B cell (primary cell): ENCODE measurements at regions of chr9 and their contacts with region 1.

Region 1: DNA sequence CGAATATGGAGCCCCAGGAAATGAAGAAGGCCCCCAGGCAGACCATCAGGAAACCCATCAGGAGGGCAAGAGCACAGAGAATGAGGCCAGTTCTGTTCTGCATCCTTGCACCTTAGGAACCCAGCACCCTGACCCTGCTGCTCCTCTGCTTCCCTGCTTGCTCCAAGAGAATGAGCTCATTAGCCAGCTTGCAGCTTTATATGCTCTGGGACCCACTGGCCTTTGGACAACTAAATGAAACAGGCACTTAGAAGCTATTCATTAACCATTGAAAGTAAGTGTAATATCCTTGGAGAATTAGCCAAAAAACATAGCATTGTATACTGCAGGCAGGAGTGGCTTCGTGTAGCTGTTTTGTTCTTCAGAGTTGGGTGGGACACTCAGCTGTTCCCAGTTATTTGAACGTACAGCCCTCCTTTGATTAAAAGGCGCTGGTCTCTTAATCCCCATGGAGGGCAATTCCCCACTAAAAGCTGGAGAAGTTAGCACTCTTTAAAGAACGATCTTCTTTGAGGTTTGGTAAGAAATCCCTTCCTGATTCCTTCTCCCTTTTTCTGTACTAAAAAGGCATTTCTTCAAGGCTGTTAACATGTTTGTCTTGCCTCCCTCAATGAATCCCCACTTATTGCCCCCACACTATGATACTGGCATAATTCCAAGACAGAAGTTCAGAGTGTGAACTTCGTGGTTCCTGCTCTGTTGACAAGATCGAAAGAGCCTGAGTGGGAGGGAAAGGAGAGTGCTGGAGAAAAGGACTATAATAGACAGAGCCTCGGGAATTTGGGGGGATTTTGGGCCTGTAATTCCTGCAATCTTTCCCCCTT is at the start of gene TMEM252:
- DNase-seq: no peak
- ATAC-seq: no peak
- H3K4me3 ChIP-seq: no peak within 1 kb of the TSS
- H3K4me3 Mint-ChIP-seq: no peak within 1 kb of the TSS
- H3K27ac ChIP-seq: no peak within 1 kb of the TSS
- H3K27ac Mint-ChIP-seq: no peak within 1 kb of the TSS
- H3K4me1 ChIP-seq: peaks cover 6 to 8% of the 10 kb centered on the region in 2 donors
- H3K4me1 Mint-ChIP-seq: peaks cover 19% of the 10 kb centered on the region
- H3K27me3 ChIP-seq: no peaks in the 10 kb centered on the region
- H3K27me3 Mint-ChIP-seq: no peaks in the 10 kb centered on the region
- CTCF ChIP-seq: no peak
- total RNA-seq, gene TMEM252: not detected in 2 replicates

Region 2: GRCh38 chr9:68560071-68560844 is 19.3 kb after region 1 on chr9:
- CTCF ChIA-PET with region 1: interaction called, 10 read pairs
- POLR2A ChIA-PET with region 1: no interaction called
- intact Hi-C with region 1: no loop called
- DNase-seq: peak; percentile 75
- ATAC-seq: peak; percentile 76
- H3K4me3 ChIP-seq: no peak overlapping the region
- H3K4me3 Mint-ChIP-seq: peak overlapping the region; percentile 74
- H3K27ac ChIP-seq: no peak overlapping the region
- H3K27ac Mint-ChIP-seq: no peak overlapping the region
- H3K4me1 ChIP-seq: peaks cover 13% of the 10 kb centered on the region in 2 donors
- H3K4me1 Mint-ChIP-seq: peaks cover 18% of the 10 kb centered on the region
- H3K27me3 ChIP-seq: peaks cover 0 to 3% (median 0%) of the 10 kb centered on the region in 4 experiments
- H3K27me3 Mint-ChIP-seq: peaks cover 10% of the 10 kb centered on the region
- CTCF ChIP-seq: peak; percentile 71

Region 3: GRCh38 chr9:68708582-68708912 is 167.6 kb after region 1 on chr9:
- CTCF ChIA-PET with region 1: no interaction called
- POLR2A ChIA-PET with region 1: no interaction called
- intact Hi-C with region 1: no loop called
- DNase-seq: peak; percentile 65
- ATAC-seq: no peak
- H3K4me3 ChIP-seq: peak overlapping the region in 1 of 5 experiments; percentile 4
- H3K4me3 Mint-ChIP-seq: peak overlapping the region; percentile 62
- H3K27ac ChIP-seq: peak overlapping the region in 1 of 2 donors; percentile 9
- H3K27ac Mint-ChIP-seq: peak overlapping the region; percentile 50
- H3K4me1 ChIP-seq: peaks cover 42 to 44% of the 10 kb centered on the region in 2 donors
- H3K4me1 Mint-ChIP-seq: peaks cover 68% of the 10 kb centered on the region
- H3K27me3 ChIP-seq: no peaks in the 10 kb centered on the region
- H3K27me3 Mint-ChIP-seq: no peaks in the 10 kb centered on the region
- CTCF ChIP-seq: no peak